Right ventricle myocardium inferior (tissue), 1 donor: ENCODE measurements at regions of chr3 and their contacts with region 1.

Region 1: DNA sequence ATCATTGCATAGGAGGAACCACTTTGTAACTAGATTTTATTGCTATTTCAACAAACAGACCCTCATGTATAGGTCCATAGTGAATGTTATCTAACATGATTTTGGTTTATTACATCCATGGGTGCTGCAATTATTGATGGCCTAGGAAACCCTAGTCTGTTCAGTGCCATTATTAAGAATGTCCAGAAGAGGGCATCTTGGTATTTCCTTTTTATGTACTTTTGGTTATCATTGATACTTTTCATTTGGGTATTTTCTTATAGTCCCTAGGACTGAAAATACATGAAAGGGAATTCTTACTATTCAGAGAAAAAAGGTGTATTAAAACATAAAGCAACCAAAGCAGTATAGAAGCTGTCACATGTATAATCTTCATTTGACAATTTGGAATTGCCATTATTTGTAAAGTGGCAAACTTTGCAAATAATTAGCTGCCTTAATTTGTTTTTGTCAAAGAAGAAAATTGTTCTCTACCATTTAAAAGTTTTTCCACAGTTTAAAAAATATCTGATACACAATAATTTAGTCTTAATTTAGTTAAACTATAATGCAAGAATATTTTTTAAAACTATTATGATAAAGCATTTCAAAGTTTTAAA is 48.7 kb downstream of the CNOT10 start:
- DNase-seq: no peak
- ATAC-seq: no peak

Region 2: GRCh38 chr3:32781210-32781968 is 47.7 kb after region 1 on chr3:
- intact Hi-C with region 1: loop called (anchors 2 kb)
- DNase-seq: peak; percentile 88
- ATAC-seq: peak; percentile 92

Region 3: GRCh38 chr3:32791833-32792232 is 58.1 kb after region 1 on chr3:
- intact Hi-C with region 1: no loop called
- DNase-seq: no peak
- ATAC-seq: no peak

Region 4: DNA sequence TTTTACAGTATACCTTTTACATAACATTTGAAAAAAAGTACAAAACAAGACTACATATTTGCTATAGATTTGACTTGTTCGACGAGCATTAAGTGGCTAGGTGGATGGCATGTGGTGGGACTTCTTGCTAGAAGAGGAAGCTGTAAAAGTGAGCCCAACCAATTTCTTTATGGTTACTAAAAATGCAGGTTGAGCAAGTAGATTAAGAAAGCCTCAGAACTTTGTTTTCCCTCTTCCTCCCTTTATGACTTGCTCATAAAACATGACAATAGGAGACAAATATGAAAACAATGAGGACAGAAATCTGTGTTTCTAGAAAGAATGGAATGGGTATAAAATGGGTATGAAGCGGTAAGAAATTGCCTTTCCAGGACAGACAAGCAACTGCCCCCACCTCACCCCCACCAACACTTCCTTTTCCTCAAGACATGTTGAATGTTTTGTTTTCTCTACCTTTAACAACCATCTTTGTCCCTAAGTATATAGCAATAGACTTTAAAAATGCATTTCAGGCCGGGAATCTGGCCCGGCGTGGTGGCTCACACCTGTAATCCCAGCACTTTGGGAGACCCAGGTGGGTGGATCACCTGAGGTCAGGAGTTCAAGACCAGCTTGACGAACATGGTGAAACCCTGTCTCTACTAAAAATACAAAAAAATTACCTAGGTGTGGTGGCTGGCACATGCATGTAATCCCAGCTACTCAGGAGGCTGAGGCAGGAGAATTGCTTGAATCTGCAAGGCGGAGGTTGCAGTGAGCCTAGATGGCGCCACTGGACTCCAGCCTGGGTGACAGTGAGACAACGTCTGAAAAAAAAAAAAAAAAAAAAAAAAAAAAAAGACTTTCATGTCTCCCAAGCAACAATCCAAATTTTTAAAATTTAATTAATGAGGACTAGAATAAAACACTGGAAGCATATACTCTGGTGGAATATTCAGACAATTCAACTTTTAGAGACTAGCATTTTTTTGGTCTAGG is 168.0 kb after region 1 on chr3:
- intact Hi-C with region 1: loop called (anchors 5 kb)
- DNase-seq: no peak
- ATAC-seq: no peak

Region 5: DNA sequence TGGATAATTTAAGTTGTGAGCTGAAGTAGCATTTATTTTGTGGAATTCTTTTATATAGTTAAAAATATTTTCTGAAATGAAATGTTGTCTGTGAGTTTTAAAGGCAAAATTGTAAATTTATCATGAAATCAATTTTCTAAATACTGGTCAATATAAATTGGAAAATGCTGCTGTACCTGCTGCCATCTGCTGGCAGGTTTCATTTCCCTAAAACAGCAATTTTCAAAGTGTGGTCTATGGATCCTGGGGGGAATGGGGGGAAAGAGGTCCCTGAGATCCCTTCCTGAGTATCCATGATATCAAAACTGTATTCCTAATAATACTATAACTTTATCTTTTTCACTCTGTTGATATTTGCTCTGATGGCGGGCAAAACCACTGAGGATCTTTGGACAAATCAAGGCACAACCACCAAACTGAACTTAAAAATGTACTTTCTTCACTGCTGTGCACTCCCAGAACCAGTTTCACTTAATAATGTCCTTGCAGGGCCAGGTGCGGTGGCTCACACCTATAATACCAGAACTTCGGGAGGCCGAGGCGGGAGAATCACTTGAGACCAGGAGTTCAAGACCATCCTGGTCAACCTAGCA is 200.5 kb after region 1 on chr3:
- intact Hi-C with region 1: loop called (anchors 2 kb)
- DNase-seq: no peak
- ATAC-seq: no peak

Region 6: GRCh38 chr3:32969656-32970055 is 235.9 kb after region 1 on chr3:
- intact Hi-C with region 1: no loop called
- DNase-seq: no peak
- ATAC-seq: no peak